ENCODE measurements at regions of chr11 and their contacts with region 1.

Region 1: DNA sequence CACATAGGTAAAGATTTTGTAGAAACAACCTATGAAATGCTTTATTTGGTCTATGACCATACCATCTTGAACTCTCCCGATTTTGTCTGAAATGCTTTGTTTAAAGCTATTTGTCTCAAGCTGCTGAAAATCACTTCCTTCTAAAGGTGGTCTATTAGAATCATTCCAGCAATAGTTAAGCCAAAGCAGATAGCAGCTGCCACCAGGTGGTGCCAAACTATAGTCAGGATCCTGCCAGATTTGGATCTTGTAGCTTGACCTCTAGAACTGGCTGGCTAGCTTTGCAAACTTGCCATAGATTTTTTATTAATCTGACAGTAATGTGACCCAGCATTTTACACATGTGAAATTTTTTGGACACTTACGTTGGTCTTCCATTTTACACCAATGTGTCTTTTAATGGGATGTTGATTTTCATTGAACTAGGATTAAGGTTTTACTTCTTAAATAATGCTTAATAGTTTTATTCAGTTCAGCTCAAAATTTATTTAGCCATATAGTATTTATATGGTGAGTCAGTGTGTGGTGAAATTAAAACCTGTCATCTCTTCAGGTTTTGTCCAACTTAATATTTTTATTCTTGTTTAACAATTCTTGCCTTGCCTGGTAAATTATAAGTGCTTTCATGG is 19.7 kb downstream of the CTR9 start:
- DNase-seq: peak in 1 of 2 experiments; percentile 27
- H3K4me3 ChIP-seq: no peak overlapping the region
- H3K27ac ChIP-seq: no peak overlapping the region
- H3K4me1 ChIP-seq: no peaks in the 10 kb centered on the region
- H3K27me3 ChIP-seq: no peaks in the 10 kb centered on the region
- CTCF ChIP-seq: peak; percentile 69

Region 2: DNA sequence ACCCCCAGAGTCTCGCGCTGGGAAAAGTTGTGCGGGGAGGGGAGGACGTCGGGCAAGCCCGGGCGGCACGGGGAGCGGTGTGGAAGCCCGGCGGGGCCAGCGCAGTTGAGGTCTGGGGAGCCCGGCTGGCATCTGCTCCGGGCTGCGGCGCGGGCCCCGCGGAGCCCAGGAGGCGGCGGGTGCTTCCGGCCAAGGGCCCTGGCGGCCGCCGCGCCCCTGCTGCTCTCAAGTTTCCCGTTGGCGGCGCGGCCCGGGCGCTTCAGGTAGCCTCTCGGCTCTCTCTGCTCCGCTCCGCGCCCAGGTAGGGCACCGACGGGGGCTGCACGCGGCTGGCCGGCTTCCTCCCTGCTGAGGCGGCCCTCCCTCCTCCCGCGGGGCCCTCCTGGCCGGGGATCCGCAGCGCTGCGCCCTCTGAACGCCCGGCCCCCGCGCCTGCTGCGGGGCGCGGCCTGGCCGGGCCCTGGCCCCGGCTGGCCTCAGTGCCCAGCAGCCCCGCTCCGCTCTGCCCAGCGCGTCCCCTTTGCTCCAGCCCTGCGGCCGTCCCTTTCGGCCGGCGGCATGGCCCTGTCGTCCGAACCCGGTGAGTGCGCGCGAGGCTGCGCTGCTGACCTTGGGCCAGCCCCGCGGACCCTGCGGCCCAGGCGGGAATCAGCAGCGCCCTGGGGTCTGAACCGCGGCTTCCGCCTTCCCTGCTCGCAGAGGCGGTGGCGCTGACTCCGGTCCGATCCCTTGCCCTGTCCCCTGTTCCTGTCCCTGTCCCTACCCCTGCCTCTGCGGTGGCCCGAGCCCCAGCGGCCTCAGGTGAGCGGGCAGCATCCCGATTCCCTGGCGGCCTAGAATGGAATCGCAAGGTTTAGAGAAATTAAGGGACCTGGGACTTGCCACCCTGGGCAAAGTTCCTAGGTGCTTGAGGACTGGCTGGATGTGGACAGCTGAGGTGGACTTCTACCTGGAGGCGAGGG is 320.0 kb before region 1 on chr11:
- CTCF ChIA-PET with region 1: interaction called, 10 read pairs
- POLR2A ChIA-PET with region 1: no interaction called
- intact Hi-C with region 1: no loop called
- DNase-seq: peak; percentile 47 to 63
- H3K4me3 ChIP-seq: peak overlapping the region; percentile 64
- H3K27ac ChIP-seq: peak overlapping the region; percentile 13; the same call in 1 of the 2 replicates
- H3K4me1 ChIP-seq: peaks cover 38% of the 10 kb centered on the region
- H3K27me3 ChIP-seq: no peaks in the 10 kb centered on the region
- CTCF ChIP-seq: peak; percentile 76

Region 3: GRCh38 chr11:10792398-10792975 is 21.7 kb after region 1 on chr11:
- CTCF ChIA-PET with region 1: interaction called, 15 read pairs
- POLR2A ChIA-PET with region 1: no interaction called
- intact Hi-C with region 1: no loop called
- DNase-seq: peak; percentile 69 to 85
- H3K4me3 ChIP-seq: no peak overlapping the region
- H3K27ac ChIP-seq: no peak overlapping the region
- H3K4me1 ChIP-seq: no peaks in the 10 kb centered on the region
- H3K27me3 ChIP-seq: no peaks in the 10 kb centered on the region
- CTCF ChIP-seq: peak; percentile 85

Region 4: DNA sequence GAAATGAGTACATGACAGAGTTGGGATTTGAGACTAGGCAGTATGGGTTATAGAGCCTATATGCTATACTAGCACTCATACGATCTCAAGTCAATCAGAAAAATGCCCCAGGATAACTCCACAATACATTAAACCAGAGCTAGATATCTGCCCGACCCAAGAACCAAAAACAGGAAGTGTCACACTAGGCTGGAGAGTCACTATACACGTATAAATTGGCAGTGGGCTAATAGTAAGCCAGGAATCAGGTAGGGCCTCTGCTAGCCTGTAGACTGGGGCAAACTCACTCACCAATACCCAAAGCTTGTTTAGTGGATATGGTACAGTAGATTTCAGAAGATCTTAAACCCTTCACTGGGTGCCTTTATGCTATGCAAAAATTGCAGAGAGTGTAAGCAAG is 54.1 kb after region 1 on chr11:
- CTCF ChIA-PET with region 1: no interaction called
- POLR2A ChIA-PET with region 1: no interaction called
- intact Hi-C with region 1: no loop called
- DNase-seq: no peak
- H3K4me3 ChIP-seq: no peak overlapping the region
- H3K27ac ChIP-seq: no peak overlapping the region
- H3K4me1 ChIP-seq: no peaks in the 10 kb centered on the region
- H3K27me3 ChIP-seq: no peaks in the 10 kb centered on the region
- CTCF ChIP-seq: no peak

Region 5: DNA sequence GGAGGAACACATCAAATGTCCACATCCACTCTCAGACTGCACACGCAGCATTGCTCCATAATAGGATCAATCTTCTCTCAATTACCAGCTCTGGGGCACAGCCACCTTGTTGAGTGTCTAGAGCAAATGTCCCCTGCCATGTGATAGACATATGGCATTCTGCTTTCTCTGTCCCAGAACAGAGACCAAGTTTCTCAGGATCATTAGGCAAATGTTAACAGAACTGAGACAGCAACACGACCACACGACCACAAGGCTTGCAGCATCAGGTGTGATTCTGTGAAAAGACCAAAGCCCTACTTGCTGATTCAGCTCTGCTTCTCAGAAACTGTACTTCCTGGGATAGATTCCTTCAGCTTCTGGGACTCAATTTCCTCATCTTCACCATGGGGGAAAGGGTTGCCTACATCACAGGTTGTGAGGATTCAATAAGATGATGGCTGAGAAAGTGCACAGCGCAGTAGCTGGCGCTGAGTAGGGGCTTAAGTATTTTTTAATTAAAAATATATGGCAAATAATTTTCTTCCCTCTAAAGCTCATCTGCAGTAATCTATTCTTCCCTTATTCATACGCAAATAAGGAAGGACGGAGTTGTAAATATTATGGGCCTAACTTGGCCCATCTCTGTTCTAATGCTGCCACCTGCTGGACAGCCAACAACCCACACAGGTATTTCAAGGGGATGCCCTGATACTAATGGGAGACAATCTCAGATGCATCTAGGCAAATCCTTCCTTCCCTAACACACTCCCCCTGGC is 1016.7 kb after region 1 on chr11:
- CTCF ChIA-PET with region 1: interaction called, 6 read pairs
- POLR2A ChIA-PET with region 1: no interaction called
- intact Hi-C with region 1: loop called (anchors 2 kb)
- DNase-seq: peak; percentile 41 to 46
- H3K4me3 ChIP-seq: no peak overlapping the region
- H3K27ac ChIP-seq: no peak overlapping the region
- H3K4me1 ChIP-seq: no peaks in the 10 kb centered on the region
- H3K27me3 ChIP-seq: peaks cover 10% of the 10 kb centered on the region; the same call in 1 of the 2 replicates
- CTCF ChIP-seq: peak; percentile 79

Measured in PC-9 (cell line).